ENCODE measurements at regions of chr15 and their contacts with region 1.

Region 1: GRCh38 chr15:44593042-44593736 is 56.2 kb downstream of the EIF3J start:
- H3K4me3 Mint-ChIP-seq: no peak overlapping the region
- H3K27ac Mint-ChIP-seq: no peak overlapping the region
- H3K4me1 Mint-ChIP-seq: no peaks in the 10 kb centered on the region
- H3K27me3 Mint-ChIP-seq: no peaks in the 10 kb centered on the region

Region 2: GRCh38 chr15:44654858-44655257 is 61.7 kb after region 1 on chr15:
- intact Hi-C with region 1: loop called (anchors 10 kb)
- H3K4me3 Mint-ChIP-seq: no peak overlapping the region
- H3K27ac Mint-ChIP-seq: no peak overlapping the region
- H3K4me1 Mint-ChIP-seq: peaks cover 11% of the 10 kb centered on the region
- H3K27me3 Mint-ChIP-seq: no peaks in the 10 kb centered on the region

Region 3: DNA sequence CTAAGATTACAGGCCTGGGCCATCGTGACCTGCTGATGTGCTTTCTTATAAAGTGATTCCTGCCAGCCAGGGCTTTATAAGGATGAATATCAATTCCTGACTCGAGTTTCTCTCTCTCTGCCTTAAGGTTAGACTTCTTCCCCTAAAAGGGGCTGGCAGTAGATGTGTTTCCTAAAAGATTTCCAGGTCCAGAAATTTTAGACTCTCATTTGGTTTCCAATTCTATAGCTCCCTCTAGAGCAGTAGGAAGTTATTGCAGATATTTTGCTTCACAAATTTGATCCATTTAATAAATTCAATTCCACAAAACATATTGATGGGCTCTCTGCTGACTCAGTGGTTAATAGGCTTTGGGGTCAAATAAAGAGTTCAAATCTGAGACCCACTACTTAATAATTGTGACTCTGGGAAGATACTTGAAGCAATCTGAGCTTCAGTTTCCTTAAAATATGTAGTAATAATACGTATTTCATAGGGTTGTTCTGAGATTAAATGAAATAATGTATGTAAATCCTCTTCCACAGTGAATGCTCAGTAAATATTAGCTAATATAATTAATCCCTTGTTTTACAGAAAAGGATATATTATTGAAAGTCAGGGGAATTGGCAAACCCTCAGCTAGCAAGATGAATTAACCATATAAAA is 145.3 kb after region 1 on chr15:
- intact Hi-C with region 1: loop called (anchors 10 kb)
- H3K4me3 Mint-ChIP-seq: no peak overlapping the region
- H3K27ac Mint-ChIP-seq: no peak overlapping the region
- H3K4me1 Mint-ChIP-seq: peaks cover 31% of the 10 kb centered on the region
- H3K27me3 Mint-ChIP-seq: no peaks in the 10 kb centered on the region